PC-3 (cell line): ENCODE measurements at regions of chr19 and their contacts with region 1.

Region 1: GRCh38 chr19:55586976-55587668 is 6.5 kb upstream of the ZNF579 start:
- DNase-seq: peak; percentile 99
- ATAC-seq: peak; percentile 91
- H3K4me3 ChIP-seq: peak overlapping the region; percentile 66
- H3K27ac ChIP-seq: no peak overlapping the region
- H3K4me1 ChIP-seq: peaks cover 10% of the 10 kb centered on the region
- H3K27me3 ChIP-seq: no peaks in the 10 kb centered on the region
- CTCF ChIP-seq: no peak

Region 2: DNA sequence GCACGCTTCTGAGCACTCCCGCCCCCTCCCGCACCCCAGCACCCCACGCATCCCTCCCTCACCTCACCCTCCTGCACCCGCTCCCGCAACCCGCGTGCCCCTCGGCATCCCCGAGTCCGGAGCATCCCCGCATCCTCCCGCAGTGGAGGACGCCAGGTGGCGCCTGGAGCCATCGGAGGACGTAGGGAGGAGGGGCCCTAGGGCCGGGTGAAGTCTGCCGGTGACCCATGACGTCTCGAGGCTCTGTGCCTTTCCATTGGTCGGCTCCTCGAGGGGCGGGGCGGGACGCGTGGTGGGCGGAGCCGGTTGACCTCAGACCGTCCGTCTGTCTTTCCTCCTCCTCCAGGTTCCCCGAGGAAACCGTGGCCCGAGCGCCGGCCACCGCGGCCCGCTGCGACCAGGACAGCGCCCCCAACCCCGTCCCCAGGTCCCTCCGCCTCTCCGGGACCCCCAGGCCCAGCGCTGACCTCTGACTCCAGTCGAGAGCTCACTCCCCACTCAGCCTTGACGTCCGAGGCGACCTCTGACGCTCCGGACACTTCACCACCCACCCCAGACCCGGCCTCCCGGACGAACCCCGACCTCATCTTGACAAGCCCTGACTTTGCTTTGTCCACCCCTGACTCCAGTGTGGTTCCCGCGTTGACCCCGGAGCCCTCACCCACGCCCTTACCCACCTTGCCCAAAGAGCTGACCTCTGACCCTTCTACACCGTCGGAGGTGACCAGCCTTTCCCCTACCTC is 70.1 kb before region 1 on chr19:
- CTCF ChIA-PET with region 1: interaction called, 4 read pairs
- POLR2A ChIA-PET with region 1: interaction called, 10 read pairs
- intact Hi-C with region 1: no loop called
- DNase-seq: peak; percentile 97
- ATAC-seq: peak; percentile 96
- H3K4me3 ChIP-seq: peak overlapping the region; percentile 65
- H3K27ac ChIP-seq: no peak overlapping the region
- H3K4me1 ChIP-seq: peaks cover 8% of the 10 kb centered on the region; the same call in 1 of the 2 replicates
- H3K27me3 ChIP-seq: 0 out of 2 replicates have a peak, but pooled peaks cover 4% of the 10 kb centered on the region
- CTCF ChIP-seq: peak; percentile 95

Region 3: DNA sequence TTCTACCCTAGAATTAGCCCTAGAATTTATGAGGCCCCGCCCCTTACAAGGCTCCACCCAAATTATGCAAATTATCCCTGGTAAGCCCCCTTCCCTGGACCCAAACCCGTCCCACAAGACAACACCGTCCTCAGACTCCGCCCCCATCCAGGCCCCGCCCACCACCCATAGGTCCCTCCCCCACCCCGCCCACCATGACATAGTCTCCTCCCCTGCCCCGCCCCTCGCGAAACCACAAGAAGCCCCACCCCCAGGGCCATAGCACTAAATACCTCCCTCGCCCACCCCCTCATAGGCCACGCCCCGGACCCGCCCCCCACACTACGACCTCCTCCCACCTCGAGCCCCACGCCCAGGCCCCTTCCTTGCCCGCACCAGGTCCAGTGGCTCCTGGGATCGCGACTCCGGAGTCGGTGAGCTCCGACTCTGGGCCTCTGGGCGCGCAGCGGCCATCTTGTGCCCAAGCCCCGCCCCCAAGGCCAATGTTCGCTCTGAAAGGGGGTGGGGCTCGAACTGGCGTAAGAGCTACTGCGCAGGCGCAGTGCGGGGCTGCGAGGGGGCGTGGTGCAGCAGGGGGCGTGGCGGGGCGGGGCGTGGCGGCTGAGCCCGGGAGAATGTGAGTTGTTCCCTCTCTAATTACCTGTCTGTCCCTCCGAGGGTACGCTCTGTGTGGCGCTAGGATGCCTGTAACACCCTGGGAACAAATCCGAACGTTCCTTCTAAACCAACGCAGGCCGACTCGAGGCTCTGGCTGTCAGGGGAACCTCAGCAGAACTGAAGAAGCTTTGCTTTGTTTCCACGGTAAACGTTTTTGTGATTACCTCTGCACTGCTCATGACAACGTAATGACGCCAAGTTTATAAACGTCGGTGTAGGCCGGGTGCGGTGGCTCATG is 37.2 kb after region 1 on chr19 and contains the start of gene ZNF784:
- CTCF ChIA-PET with region 1: no interaction called
- POLR2A ChIA-PET with region 1: no interaction called
- intact Hi-C with region 1: loop called (anchors 2 kb)
- DNase-seq: peak; percentile 95
- ATAC-seq: peak; percentile 87
- H3K4me3 ChIP-seq: peak within 1 kb of the TSS; percentile 71
- H3K27ac ChIP-seq: peak within 1 kb of the TSS; percentile 76
- H3K4me1 ChIP-seq: peaks cover 10% of the 10 kb centered on the region
- H3K27me3 ChIP-seq: no peaks in the 10 kb centered on the region
- CTCF ChIP-seq: no peak
- total RNA-seq, gene ZNF784: 9.0 and 18.0 TPM in 2 replicates